ENCODE measurements at regions of chr13 and their contacts with region 1.

Region 1: DNA sequence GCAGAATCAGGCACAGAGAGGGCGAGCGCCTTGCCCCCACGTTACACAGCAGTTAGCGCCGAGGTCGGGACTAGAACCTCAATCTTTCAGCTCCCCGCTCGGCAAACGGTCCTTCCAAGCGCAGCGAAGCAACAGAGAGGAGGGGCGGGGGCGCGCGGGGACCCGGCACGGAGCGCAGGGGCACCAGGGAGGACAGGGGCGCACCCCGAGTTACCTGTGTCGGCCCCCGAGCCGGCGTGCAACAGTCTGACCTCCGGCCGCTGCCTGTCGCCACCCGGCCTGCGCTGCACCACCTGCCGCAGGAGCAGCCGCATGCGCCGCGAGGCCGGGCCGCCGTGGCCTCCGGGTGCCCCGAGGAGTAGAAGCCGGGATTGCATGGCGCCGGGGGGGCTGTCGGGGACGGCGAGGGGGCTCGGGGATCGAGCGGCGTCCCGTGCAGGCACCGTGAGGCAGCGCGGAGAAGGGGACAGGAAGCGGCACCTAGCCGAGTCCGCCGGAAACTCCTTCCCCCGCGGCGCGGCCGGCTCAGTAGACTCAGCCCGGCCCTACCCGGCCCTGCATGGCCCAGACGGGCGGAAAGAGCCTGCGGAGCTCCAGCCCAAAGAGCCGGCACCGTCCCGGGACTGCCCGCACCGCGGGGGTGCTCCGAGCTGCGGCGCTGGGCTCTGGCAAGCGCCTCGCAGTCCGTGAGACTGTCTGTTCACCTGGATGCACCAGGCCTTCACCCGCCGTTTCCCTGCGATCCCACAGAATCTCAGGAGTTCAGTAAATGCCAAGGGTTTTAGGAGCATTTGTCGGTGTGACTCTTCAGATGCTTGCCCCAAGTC is at the start of gene VWA8:
- DNase-seq: peak; percentile 80
- H3K4me3 Mint-ChIP-seq: peak within 1 kb of the TSS; percentile 92
- H3K27ac Mint-ChIP-seq: peak within 1 kb of the TSS; percentile 85
- H3K4me1 Mint-ChIP-seq: peaks cover 33% of the 10 kb centered on the region
- H3K27me3 Mint-ChIP-seq: no peaks in the 10 kb centered on the region
- total RNA-seq, gene VWA8: 21.7 and 22.5 TPM in 2 replicates

Region 2: DNA sequence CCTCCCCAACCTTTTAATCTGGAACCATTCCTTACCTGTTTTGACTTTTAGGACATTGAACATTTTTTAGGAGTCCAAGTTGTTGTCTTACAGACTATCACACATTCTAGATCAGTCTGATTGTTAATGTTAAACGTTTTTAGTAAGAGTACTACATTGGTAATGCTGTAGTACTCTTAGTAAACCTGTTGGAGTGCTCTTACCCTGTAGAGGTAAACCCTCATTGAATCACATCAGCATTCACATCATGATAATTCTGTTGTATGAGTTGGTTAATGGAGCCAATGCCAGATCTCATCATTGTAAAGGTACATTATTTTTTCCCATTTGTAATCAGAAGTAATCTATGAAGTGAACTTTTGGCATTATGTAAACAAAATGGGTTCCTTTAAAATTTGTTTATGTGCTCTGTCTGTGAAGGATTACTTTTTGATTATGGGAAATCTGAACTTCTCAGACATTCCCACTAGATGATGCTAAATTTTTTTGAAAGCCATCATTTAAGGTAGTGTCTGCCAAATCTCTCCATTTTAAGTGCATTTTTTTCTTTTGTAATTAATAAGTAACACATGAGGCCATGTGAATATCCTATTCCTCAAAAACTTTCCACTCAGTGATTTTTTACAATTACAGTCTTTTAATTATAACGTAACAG is 55.1 kb before region 1 on chr13:
- intact Hi-C with region 1: loop called (anchors 5 kb)
- DNase-seq: no peak
- H3K4me3 Mint-ChIP-seq: no peak overlapping the region
- H3K27ac Mint-ChIP-seq: no peak overlapping the region
- H3K4me1 Mint-ChIP-seq: peaks cover 14% of the 10 kb centered on the region
- H3K27me3 Mint-ChIP-seq: no peaks in the 10 kb centered on the region

Region 3: GRCh38 chr13:41916173-41916954 is 44.5 kb before region 1 on chr13:
- intact Hi-C with region 1: loop called (anchors 1 kb)
- DNase-seq: no peak
- H3K4me3 Mint-ChIP-seq: peak overlapping the region; percentile 71
- H3K27ac Mint-ChIP-seq: peak overlapping the region; percentile 93
- H3K4me1 Mint-ChIP-seq: peaks cover 53% of the 10 kb centered on the region
- H3K27me3 Mint-ChIP-seq: no peaks in the 10 kb centered on the region

Region 4: DNA sequence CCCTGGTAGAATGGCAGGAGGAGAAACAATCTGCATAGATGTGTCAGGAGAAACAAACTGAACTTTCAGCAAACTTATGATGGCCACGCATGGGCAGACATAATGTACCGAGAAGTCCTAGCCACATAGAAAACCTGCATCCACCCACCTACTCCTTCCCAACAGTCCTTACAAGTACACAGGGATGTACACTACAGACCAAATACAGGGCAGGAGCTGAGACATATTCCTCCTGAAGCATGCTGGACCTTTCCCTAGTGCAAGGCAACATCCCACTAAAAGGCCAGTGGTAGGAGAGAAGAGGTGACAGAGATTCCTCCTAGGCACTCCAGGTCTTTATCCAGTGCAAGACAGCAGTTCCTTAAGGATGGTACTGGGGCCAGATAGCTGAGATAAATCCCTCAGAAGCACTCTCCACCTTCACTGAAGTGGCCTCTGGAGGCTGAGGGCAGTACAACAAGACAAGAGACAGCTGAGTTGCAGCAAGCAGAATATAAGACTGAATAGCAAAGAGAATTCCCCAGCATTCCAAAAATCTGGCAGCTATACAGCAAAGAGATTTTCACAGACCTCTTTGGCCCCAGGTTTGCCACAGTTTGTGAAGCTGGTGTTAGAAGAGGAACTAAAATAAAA is 18.3 kb before region 1 on chr13:
- intact Hi-C with region 1: no loop called
- DNase-seq: no peak
- H3K4me3 Mint-ChIP-seq: no peak overlapping the region
- H3K27ac Mint-ChIP-seq: no peak overlapping the region
- H3K4me1 Mint-ChIP-seq: peaks cover 4% of the 10 kb centered on the region
- H3K27me3 Mint-ChIP-seq: no peaks in the 10 kb centered on the region

Region 5: DNA sequence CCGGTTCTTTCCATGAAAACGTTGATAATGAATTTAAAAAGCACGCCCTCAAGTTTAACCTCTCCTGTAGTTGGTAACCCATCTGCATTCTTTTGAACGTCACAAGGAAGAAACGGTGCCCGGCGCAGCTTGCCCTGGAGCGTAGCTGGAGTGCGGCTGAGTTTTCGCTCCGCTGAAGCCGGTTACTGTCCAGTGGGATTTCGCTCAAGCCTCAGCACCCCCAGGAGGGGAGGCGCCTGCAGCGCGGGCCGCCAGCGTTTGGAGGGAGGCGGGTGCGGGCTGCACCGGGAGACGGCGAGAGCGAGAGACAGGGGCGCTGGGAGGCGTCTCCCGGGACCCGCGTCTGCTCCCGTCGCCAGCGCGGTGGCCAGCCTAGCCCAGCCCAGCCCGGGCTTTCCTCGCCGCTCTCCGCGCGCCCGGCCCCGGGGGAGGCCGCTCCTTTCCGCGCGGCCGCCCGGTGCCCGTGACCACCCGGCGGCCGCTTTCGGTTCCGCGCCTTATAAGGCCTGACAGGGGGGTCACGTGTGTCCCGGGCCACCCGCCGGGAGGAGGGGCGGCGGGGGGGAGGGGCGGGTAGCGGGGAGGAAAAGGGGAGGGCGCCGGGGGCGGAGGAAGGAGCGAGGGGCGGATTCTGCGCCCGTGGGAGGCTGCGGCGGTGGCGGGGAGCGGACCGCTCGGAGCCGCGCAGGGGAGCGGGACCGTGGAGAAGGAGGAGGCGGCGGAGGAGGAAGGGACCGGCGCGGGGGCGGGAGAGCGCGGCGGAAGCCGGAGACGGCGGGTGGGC is 79.3 kb after region 1 on chr13:
- intact Hi-C with region 1: loop called (anchors 2 kb)
- DNase-seq: peak; percentile 80
- H3K4me3 Mint-ChIP-seq: peak overlapping the region; percentile 84
- H3K27ac Mint-ChIP-seq: peak overlapping the region; percentile 67
- H3K4me1 Mint-ChIP-seq: peaks cover 17% of the 10 kb centered on the region
- H3K27me3 Mint-ChIP-seq: peaks cover 38% of the 10 kb centered on the region

Region 6: DNA sequence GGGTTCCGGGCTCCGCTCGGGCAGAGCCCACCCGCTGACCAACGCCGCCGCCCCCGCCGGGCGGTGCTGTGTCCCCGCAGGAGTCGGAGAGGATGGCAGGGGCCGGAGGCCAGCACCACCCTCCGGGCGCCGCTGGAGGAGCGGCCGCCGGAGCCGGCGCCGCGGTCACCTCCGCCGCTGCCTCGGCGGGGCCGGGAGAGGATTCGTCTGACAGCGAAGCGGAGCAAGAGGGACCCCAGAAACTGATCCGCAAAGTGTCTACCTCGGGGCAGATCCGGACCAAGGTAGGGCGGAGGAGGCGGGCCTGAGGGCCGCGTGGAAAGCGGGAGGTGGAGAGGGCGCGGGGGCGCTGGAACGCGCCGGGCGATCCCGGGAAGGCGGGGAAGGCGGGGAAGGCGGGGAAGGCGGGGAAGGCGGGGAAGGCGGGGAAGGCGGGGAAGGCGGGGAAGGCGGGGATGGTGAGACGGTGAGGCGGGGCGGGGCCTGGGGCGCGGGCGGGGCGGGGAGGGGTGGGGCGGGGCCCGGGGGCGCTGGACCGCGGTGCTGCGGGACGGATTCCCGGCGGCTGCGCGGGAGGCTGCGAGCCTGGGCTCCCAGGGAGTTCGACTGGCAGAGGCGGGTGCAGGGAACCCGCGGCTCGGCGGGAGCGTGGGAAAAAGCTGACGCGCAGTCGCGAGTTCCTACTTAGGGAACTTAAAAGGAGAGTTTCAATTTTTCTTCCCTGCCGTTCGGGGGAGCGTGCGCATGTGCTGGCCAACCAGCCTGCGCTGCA is 88.0 kb after region 1 on chr13:
- intact Hi-C with region 1: loop called (anchors 2 kb)
- DNase-seq: peak; percentile 59
- H3K4me3 Mint-ChIP-seq: peak overlapping the region; percentile 87
- H3K27ac Mint-ChIP-seq: peak overlapping the region; percentile 75
- H3K4me1 Mint-ChIP-seq: peaks cover 27% of the 10 kb centered on the region
- H3K27me3 Mint-ChIP-seq: peaks cover 3% of the 10 kb centered on the region

Region 7: DNA sequence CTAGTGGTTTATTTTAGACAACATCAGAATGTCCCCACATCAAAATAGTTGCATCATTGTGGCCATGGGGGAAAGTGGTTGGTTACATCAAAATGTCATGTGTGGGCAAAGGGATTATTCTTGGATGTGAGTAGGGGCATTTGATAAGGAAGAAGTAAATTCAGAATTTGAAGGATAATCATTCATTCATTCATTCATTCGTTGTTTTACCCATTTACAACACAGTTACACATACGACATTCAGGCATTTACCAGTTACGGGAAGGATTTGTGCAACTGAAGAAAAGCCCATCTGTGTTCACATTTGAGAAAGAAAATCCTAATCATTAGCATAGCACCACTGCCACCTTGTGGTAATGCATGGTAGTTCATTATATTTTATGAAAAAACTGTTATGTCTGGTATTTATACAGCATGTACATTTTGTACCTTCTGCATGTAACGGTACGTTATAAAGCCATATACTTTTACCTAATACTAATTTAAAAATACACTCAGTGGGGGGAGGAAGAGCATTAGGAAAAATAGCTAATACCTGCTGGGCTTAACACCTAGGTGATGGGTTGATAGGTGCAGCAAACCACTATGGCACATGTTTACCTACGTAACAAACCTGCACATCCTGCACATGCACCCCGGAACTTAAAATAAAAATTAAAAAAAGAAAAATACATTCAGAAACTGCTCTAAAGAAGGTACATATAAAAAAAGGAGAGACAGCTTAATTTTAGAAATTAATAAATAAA is 149.7 kb after region 1 on chr13:
- intact Hi-C with region 1: loop called (anchors 10 kb)
- DNase-seq: no peak
- H3K4me3 Mint-ChIP-seq: no peak overlapping the region
- H3K27ac Mint-ChIP-seq: no peak overlapping the region
- H3K4me1 Mint-ChIP-seq: peaks cover 15% of the 10 kb centered on the region
- H3K27me3 Mint-ChIP-seq: no peaks in the 10 kb centered on the region